AG04450 (cell line): ENCODE measurements at regions of chr17 and their contacts with region 1.

Region 1: DNA sequence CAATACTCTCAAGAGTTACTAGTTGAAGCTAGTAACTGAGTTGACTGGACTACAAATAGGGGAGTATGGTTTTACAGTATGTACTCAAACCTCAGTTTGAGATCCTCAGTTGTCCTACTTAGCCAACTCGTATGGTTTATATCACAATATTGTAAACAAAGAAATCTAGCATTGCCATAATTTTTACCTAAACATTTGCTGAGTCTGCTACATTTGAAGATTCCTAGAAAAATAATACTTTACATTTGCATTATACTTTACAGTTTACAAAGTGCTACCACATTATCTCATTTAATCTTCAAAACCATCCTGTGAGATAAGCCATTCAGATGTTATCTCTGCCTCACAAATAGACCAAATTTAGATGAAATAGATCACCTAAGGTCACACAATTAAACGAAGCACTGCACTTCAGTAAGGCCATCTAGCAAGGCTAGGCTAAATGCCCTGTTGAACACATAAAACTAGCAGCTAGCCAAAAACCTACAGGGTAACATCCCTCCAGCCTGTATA is 16.3 kb downstream of the CBX1 start:
- DNase-seq: no peak
- H3K4me3 ChIP-seq: no peak overlapping the region
- H3K27ac ChIP-seq: no peak overlapping the region
- H3K27me3 ChIP-seq: no peaks in the 10 kb centered on the region
- CTCF ChIP-seq: no peak

Region 2: DNA sequence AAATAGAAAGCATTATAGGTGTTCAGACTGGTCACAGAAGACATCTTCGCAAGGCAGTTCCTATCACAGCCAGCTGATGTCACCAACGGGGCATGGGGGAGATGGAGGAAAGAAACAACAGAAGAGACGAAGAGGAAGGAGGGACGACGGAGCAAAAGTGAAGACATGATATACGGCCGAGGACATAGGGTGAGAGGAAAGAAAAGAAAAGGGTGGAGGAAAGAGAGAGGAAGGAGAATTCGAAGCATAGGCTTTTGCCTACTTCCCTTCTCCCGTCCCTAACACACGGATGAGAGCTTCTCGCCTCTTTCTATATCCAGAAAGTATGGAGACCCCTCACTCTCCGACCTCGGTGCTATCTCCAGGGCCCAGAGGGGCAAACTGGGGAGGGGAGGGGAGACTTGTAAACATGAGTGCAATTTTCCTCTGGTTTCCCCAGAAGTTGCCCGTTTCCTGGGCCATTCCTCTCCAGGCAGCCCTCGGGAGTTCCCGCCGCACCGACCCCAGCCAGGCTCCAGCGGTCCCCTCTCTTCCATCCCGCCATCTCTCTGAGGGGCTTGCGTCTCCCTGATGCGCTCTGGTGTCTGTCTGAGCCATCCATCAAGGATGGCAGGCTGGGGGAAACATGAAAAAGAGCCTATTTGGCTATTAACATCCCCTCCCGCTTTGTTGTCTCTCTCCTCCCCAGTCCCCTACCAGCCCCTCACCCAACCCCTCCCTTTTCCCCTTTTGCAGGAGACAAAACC is 73.4 kb before region 1 on chr17:
- CTCF ChIA-PET with region 1: no interaction called
- POLR2A ChIA-PET with region 1: no interaction called
- DNase-seq: no peak
- H3K4me3 ChIP-seq: peak overlapping the region; percentile 54
- H3K27ac ChIP-seq: no peak overlapping the region
- H3K27me3 ChIP-seq: peaks cover 9% of the 10 kb centered on the region
- CTCF ChIP-seq: peak; percentile 59

Region 3: GRCh38 chr17:48037036-48037837 is 47.8 kb before region 1 on chr17 and contains the start of gene COPZ2:
- CTCF ChIA-PET with region 1: interaction called, 12 read pairs
- POLR2A ChIA-PET with region 1: no interaction called
- DNase-seq: no peak
- H3K4me3 ChIP-seq: peak within 1 kb of the TSS; percentile 70
- H3K27ac ChIP-seq: peak within 1 kb of the TSS; percentile 57
- H3K27me3 ChIP-seq: no peaks in the 10 kb centered on the region
- CTCF ChIP-seq: peak; percentile 57
- polyA plus RNA-seq, gene COPZ2: 107 and 122 TPM in 2 replicates

Region 4: DNA sequence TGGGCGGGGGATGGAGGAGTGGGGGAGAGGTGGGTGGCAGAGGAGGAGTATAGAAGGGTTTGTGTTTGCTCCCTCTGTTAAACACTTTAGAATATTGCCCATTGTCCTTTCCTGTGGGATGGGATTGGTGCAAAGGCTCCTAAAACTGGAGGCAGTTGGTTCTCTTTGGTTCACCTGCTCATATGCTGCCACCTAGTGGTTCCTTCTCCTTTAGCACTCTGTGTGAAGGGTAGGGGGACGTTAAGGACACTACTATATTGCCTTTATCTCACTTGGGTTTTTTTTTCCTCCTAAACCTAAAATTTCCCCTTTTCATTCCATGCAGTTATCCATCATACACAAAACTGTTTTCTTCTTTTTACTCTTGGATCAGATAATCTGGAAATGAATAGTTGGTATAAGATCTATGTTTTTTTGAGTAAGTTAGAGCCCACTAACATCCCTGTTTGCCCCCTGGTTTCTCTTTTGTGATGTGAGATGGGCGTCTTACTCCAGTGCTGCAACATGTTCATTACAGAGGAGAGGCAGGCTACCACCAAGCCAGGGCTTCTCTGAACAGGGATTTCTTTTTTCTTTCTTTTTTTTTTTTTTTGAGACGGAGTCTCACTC is 46.3 kb after region 1 on chr17:
- CTCF ChIA-PET with region 1: interaction called, 10 read pairs
- POLR2A ChIA-PET with region 1: no interaction called
- DNase-seq: peak; percentile 16
- H3K4me3 ChIP-seq: no peak overlapping the region
- H3K27ac ChIP-seq: no peak overlapping the region
- H3K27me3 ChIP-seq: peaks cover 5% of the 10 kb centered on the region
- CTCF ChIP-seq: peak; percentile 91

Region 5: DNA sequence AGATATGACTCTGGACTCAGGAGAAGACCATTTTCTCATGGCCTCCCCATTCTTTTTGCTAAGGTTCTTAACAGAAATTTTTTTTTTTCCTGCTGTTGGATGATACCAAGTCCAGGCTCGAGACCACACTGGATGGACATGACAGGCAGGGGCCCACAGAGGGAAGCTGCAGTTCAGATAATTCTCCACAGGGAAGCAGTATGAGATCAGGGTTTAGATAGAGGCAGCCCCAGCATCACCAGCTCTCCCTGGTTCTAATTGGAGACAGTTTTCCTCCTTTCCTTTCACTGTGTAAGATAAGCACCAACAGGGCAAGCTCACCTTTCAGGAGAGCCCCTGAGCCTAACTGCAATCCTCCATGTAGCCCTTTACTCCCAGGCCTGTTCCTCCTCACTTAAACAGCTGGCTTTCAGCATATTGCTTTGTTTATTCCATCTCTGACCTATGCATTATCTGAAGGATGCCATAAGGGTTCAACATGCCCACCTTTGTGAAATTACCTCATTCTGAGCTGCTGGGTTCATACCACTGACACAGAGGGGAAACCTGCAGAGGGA is 130.7 kb after region 1 on chr17:
- CTCF ChIA-PET with region 1: no interaction called
- POLR2A ChIA-PET with region 1: no interaction called
- DNase-seq: no peak
- H3K4me3 ChIP-seq: no peak overlapping the region
- H3K27ac ChIP-seq: no peak overlapping the region
- H3K27me3 ChIP-seq: peaks cover 48% of the 10 kb centered on the region
- CTCF ChIP-seq: peak; percentile 46; the same call in 1 of the 2 replicates